ENCODE measurements at regions of chr12 and their contacts with region 1.

Region 1: DNA sequence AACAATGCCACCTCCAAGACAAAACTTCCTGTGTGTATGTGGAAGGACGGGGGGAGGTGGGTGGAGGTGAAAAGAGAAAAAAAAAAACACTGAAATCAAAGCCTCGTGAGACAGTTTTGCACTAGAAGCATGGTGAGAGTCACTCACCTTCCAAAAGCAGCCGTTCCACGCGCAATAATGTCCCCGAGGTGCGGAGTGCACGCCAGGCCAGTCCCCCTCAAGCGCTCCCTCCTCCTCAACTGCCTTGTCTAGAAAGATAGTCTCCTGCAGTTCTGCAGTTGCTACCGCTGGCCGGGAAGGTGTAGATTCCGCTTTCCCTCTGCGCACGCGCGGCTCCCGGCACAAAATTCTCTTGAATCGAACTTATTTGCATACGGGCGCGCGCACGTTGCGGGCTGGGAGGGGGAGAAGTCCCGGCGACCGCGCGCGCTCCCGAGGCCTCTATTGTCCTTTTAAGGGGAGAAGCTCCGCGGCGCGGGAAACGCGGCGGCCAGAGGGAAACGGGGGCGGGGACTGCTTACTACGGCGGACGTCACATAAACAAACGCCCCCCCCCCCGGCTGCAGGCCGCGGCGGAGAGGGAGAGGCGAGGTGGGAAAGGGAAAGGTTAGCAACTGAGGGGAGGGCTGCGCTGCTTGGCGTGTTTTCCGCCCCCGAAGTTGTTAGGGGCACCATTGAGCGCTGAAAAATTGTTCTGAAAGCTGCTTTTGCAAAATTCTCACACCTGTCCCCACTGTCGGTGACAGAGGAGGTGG is at the start of gene SINHCAF:
- DNase-seq: peak; percentile 99
- ATAC-seq: peak; percentile 77
- H3K4me3 ChIP-seq: peak within 1 kb of the TSS; percentile 73 to 88 (median 80)
- H3K27ac ChIP-seq: peak within 1 kb of the TSS; percentile 86
- H3K4me1 ChIP-seq: peaks cover 31% of the 10 kb centered on the region
- H3K27me3 ChIP-seq: no peaks in the 10 kb centered on the region; a peak in 2 of 5 replicates
- CTCF ChIP-seq: no peak
- EP300 ChIP-seq: no peak
- POLR2A ChIP-seq: peak; percentile 93 to 99
- RAD21 ChIP-seq: no peak
- total RNA-seq, gene SINHCAF: 97.8 and 132 TPM in 2 replicates

Region 2: DNA sequence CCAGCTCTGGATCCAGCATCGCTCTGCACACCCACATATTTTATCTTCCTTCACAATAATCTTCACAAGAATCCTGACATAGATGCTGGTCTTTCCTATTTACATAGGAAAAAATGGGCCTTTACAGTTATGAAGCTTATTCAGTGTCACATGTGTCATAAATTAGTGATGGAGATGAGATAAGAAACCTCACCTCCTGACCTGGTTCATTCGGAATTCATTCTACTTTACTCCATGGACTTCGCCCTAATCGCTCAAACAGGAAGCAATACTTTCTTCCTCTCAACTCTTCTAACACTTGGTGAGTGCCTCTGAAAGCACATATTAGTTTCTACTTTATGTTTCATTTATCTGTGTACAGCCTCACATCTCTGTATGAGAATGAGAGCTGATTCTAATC is 11.9 kb after region 1 on chr12:
- CTCF ChIA-PET with region 1: no interaction called
- POLR2A ChIA-PET with region 1: interaction called, 10 read pairs
- in situ Hi-C with region 1: no loop called
- intact Hi-C with region 1: no loop called
- DNase-seq: peak; percentile 25
- ATAC-seq: peak; percentile 51; the same call in 2 of the 3 replicates
- H3K4me3 ChIP-seq: no peak overlapping the region
- H3K27ac ChIP-seq: no peak overlapping the region
- H3K4me1 ChIP-seq: peaks cover 12% of the 10 kb centered on the region
- H3K27me3 ChIP-seq: peaks cover 0 to under 1% of the 10 kb centered on the region in 2 experiments; a peak in 1 of 5 replicates
- CTCF ChIP-seq: no peak
- EP300 ChIP-seq: no peak
- POLR2A ChIP-seq: no peak
- RAD21 ChIP-seq: no peak

Region 3: GRCh38 chr12:31353750-31354708 is 28.0 kb after region 1 on chr12:
- CTCF ChIA-PET with region 1: no interaction called
- POLR2A ChIA-PET with region 1: interaction called, 13 read pairs
- in situ Hi-C with region 1: no loop called
- intact Hi-C with region 1: loop called (anchors 1 kb)
- DNase-seq: no peak
- ATAC-seq: no peak
- H3K4me3 ChIP-seq: no peak overlapping the region; a peak in 1 of 6 replicates
- H3K27ac ChIP-seq: no peak overlapping the region
- H3K4me1 ChIP-seq: peaks cover 29% of the 10 kb centered on the region
- H3K27me3 ChIP-seq: no peaks in the 10 kb centered on the region
- CTCF ChIP-seq: no peak
- EP300 ChIP-seq: no peak
- POLR2A ChIP-seq: no peak
- RAD21 ChIP-seq: no peak

Region 4: GRCh38 chr12:31362759-31363415 is 36.8 kb after region 1 on chr12:
- CTCF ChIA-PET with region 1: no interaction called
- POLR2A ChIA-PET with region 1: interaction called, 14 read pairs
- in situ Hi-C with region 1: no loop called
- intact Hi-C with region 1: loop called (anchors 2 kb)
- DNase-seq: peak; percentile 35
- ATAC-seq: peak; percentile 81
- H3K4me3 ChIP-seq: peak overlapping the region; percentile 64 to 77 (median 73)
- H3K27ac ChIP-seq: peak overlapping the region; percentile 84
- H3K4me1 ChIP-seq: peaks cover 27% of the 10 kb centered on the region
- H3K27me3 ChIP-seq: no peaks in the 10 kb centered on the region; a peak in 1 of 5 replicates
- CTCF ChIP-seq: peak; percentile 27; the same call in 1 of the 2 replicates
- EP300 ChIP-seq: no peak
- POLR2A ChIP-seq: no peak
- RAD21 ChIP-seq: no peak